CD8-positive, alpha-beta memory T cell (primary cell): ENCODE measurements at regions of chr3 and their contacts with region 1.

Region 1: DNA sequence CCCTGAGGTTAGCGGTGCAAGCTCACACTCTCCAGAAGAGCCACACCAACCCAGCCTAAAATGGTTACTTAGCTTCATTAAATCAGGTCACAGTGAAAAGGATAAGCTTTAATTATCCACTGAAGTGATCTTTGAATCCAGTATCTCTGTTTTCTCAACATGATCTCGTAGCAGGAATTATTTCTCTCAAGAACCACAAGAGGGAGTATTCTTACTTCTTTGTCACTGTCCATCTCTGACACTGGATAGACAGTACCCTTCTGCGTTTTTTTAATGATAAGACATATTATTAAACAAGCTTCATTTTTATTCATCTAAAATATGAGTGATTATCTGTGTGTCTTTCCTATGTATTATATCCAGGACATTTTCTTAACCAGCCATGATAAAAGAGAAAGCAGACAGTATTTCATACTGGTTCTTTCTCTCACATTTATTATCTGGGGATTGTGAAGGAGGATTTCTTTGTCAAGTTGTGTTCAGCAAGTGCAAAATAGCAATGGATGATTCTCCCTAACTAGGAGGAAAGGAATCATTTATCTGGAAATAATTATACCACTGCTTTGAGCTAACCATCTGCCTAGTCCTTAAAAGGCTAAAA is 105.4 kb upstream of the CCDC54 start:
- DNase-seq: no peak
- H3K4me3 ChIP-seq: no peak overlapping the region
- H3K4me3 Mint-ChIP-seq: no peak overlapping the region
- H3K27ac ChIP-seq: no peak overlapping the region
- H3K27ac Mint-ChIP-seq: no peak overlapping the region
- H3K4me1 ChIP-seq: no peaks in the 10 kb centered on the region
- H3K4me1 Mint-ChIP-seq: no peaks in the 10 kb centered on the region
- H3K27me3 ChIP-seq: no peaks in the 10 kb centered on the region
- H3K27me3 Mint-ChIP-seq: peaks cover 5 to 42% of the 10 kb centered on the region in 2 donors

Region 2: DNA sequence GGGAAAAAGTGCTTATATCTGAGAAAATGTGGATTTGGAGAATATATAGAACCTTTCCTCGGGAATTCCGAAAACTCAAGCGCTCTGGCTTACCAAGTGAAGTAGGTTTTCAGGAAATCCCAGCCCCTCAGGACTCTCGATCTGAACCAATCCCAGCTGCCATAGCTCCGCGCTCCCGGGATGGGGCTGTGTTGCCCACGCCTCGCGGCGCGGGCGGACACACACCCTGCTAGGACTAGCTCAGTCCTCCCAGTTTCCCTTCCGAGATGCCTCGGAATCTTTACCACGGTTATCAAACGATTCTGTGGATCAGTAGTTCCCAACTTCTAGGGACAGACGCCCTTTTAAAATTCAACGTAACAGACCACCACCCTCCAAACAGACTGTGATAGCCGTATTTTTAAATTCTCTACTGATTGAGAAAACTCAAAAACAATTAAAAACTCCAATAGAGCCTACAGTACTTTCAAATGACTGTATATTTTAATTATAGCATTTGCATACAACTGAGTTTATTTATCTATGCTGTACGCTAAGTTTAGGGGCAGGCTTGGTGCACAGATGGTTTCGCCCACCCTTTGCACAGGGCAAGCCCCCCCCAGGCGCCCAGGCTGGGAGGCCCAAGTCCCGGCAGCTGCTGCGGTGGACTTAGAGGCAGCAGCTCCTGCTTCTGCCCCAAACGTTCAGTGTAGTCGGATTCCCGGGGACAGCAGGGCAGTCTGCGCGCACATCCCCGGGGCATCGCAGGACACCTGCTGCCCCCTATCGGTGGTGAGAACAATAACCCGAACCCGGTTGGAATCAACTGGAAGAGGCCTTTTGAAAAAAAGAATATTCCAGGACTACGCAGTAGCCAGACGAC is 157.7 kb after region 1 on chr3:
- CTCF ChIA-PET with region 1: interaction called, 14 read pairs
- POLR2A ChIA-PET with region 1: no interaction called
- DNase-seq: peak; percentile 24 to 66 (median 48)
- H3K4me3 ChIP-seq: peak overlapping the region; percentile 58
- H3K4me3 Mint-ChIP-seq: peak overlapping the region; percentile 87 to 94 (median 90)
- H3K27ac ChIP-seq: no peak overlapping the region
- H3K27ac Mint-ChIP-seq: peak overlapping the region in 4 of 8 donors; percentile 22 to 91 (median 44)
- H3K4me1 ChIP-seq: peaks cover 15% of the 10 kb centered on the region
- H3K4me1 Mint-ChIP-seq: peaks cover 20 to 26% (median 22%) of the 10 kb centered on the region in 3 donors
- H3K27me3 ChIP-seq: no peaks in the 10 kb centered on the region
- H3K27me3 Mint-ChIP-seq: peaks cover 0 to 11% of the 10 kb centered on the region in 2 donors